Prostate gland (tissue), 2 donors: ENCODE measurements at regions of chr11 and their contacts with region 1.

Region 1: DNA sequence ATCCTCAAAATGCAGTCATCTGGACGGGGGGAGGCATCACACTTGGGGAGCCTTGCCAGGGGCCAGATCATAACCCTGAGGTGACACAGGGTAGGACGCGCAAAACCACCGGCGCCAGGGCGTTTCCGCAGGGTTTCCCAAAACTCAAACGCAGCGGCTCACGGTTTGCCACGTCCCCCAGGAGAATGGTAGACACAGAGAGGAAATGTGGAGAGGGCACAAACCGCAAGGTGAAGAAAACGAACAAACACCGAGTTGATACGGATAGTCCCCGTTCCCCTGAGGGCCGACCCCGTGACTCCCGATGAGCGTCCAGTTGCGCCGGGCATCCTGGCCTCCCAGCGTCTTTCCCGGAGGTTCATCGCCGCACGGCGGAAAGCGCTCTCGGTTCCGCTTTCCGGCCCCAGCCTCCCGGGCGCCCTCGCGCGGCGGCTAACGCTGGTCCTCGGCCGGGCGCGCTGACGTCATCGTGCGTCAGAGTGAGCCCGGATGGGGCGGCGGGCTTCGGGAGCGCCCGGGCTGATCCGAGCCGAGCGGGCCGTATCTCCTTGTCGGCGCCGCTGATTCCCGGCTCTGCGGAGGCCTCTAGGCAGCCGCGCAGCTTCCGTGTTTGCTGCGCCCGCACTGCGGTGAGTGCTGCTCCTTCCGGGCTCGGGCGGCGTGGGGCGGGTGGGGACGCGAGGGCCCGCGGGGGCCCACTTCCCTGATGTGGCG is at the start of gene BIRC2:
- DNase-seq: peak; percentile 93
- H3K4me3 ChIP-seq: peak within 1 kb of the TSS; percentile 89
- H3K27ac ChIP-seq: peak within 1 kb of the TSS; percentile 98 to 100
- H3K4me1 ChIP-seq: no peaks in the 10 kb centered on the region
- H3K27me3 ChIP-seq: no peaks in the 10 kb centered on the region
- CTCF ChIP-seq: peak; percentile 72 to 98 (median 90)
- POLR2A ChIP-seq: peak; percentile 88
- total RNA-seq, gene BIRC2: 48.7 to 54.5 TPM

Region 2: DNA sequence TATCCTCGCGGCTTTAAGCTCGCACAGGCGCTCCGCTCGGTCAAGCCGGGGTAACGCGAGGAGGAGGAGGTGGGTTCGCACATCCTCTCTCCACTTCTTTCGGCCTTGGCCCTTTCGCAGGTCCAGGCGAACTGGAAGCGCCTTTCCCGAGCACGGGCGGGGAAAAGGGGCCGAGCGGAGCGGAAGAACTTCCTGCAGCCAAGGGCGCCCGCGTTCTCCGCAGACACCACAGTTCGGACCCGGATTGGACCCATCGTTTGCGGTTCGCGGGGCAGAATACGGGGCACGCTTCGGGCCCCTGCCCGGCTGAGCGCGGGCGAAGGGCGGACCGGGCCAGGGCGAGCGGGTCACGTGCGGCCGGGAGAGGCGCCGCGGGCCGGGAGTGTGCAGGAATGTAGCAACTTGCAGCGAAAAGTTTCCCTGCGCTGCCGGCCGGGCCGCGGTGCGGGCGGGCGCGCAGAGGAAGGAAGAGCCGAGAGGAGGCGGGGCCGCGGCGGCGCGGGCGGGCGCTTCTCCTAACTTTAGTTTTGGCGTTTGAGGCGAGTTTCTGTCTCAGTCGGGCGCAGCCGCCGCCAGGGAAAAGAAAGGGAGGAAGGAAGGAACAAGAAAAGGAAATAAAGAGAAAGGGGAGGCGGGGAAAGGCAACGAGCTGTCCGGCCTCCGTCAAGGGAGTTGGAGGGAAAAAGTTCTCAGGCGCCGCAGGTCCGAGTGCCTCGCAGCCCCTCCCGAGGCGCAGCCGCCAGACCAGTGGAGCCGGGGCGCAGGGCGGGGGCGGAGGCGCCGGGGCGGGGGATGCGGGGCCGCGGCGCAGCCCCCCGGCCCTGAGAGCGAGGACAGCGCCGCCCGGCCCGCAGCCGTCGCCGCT is 236.8 kb before region 1 on chr11 and contains the start of gene YAP1:
- intact Hi-C with region 1: loop called (anchors 10 kb)
- DNase-seq: peak; percentile 86
- H3K4me3 ChIP-seq: peak within 1 kb of the TSS; percentile 73 to 96
- H3K27ac ChIP-seq: peak within 1 kb of the TSS; percentile 96 to 99
- H3K4me1 ChIP-seq: no peaks in the 10 kb centered on the region
- H3K27me3 ChIP-seq: no peaks in the 10 kb centered on the region
- CTCF ChIP-seq: peak in 2 of 4 experiments; percentile 12 to 38
- POLR2A ChIP-seq: peak; percentile 75
- total RNA-seq, gene YAP1: 137 to 210 TPM

Region 3: DNA sequence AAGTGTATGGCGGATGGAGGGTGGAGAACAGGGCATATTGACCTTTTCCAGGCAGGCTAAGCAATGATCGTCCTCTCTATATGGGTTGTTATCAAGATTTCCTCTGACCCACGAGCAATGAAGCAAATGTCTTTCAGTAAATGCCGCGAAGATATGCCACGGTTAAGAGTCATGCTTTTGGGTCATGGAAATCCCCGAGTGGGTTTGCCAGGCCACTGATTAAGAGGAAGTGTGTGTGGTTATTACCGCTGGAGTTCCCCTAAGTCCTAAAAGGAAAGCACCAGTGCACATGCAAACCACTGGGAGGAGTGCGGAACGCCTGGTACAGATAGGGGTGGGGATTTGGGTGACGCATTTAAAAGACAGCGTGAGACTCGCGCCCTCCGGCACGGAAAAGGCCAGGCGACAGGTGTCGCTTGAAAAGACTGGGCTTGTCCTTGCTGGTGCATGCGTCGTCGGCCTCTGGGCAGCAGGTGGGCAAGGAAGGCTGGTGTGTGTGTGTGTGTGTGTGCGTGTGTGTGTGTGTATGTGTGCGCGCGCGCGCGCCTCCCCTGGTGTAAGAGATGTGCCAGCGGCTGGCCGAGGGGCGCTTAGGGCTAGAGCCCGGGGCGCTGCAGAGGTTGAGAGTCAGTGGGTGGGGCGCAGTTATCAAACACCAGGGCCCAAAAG is 29.7 kb before region 1 on chr11 and contains the start of gene BIRC3:
- intact Hi-C with region 1: loop called (anchors 2 kb)
- DNase-seq: peak; percentile 87
- H3K4me3 ChIP-seq: peak within 1 kb of the TSS; percentile 40 to 45
- H3K27ac ChIP-seq: peak within 1 kb of the TSS; percentile 65 to 74
- H3K4me1 ChIP-seq: no peaks in the 10 kb centered on the region
- H3K27me3 ChIP-seq: no peaks in the 10 kb centered on the region
- CTCF ChIP-seq: peak in 2 of 4 experiments; percentile 49 to 60
- POLR2A ChIP-seq: peak; percentile 63
- total RNA-seq, gene BIRC3: 5.2 to 9.2 TPM

Region 4: DNA sequence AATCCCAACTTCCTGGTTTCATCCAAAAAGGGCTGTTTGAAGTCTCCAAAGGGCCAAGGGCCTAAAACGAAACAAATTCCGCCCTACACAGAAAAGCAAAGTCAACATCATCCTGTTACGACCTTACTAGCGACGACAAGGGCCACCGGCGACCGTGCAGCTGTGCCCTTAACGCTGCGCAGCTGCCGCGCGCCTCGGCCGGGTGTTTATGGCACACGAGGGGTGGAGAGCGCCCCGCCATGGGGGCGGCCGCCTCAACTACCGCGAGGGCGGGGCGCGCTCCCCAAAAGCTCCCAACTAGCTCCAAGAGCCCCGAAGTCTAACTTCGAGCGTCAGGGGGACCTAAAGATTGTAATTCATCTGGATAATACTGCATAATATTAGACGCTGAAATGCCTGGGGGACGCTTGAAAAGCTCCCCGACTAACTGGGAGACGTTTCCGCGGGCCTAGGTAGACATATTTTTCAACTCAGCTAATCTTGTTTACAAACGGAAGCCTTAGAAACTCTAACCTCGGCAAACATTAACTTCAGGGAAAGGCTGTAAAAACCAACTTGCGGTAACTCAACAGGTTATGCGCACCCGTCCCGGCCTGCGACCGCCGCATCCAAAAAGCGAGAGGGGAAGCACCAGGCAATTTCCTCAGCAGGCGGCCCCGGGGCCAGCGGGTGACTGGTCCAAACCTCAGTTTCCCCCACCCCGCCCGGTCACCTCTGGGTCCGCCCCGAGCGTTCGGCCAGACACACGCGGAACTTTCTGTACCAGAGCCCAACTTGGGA is 105.0 kb after region 1 on chr11:
- intact Hi-C with region 1: no loop called
- DNase-seq: peak; percentile 69
- H3K4me3 ChIP-seq: peak overlapping the region; percentile 66 to 92
- H3K27ac ChIP-seq: peak overlapping the region; percentile 89 to 91
- H3K4me1 ChIP-seq: no peaks in the 10 kb centered on the region
- H3K27me3 ChIP-seq: no peaks in the 10 kb centered on the region
- CTCF ChIP-seq: peak in 1 of 4 experiments; percentile 14
- POLR2A ChIP-seq: peak; percentile 53

Region 5: GRCh38 chr11:102559839-102560238 is 212.9 kb after region 1 on chr11:
- intact Hi-C with region 1: loop called (anchors 5 kb)
- DNase-seq: no peak
- H3K4me3 ChIP-seq: no peak overlapping the region
- H3K27ac ChIP-seq: peak overlapping the region; percentile 59 to 67
- H3K4me1 ChIP-seq: peaks cover 3% of the 10 kb centered on the region
- H3K27me3 ChIP-seq: no peaks in the 10 kb centered on the region
- CTCF ChIP-seq: no peak
- POLR2A ChIP-seq: no peak